ENCODE measurements at regions of chr9 and their contacts with region 1.

Region 1: DNA sequence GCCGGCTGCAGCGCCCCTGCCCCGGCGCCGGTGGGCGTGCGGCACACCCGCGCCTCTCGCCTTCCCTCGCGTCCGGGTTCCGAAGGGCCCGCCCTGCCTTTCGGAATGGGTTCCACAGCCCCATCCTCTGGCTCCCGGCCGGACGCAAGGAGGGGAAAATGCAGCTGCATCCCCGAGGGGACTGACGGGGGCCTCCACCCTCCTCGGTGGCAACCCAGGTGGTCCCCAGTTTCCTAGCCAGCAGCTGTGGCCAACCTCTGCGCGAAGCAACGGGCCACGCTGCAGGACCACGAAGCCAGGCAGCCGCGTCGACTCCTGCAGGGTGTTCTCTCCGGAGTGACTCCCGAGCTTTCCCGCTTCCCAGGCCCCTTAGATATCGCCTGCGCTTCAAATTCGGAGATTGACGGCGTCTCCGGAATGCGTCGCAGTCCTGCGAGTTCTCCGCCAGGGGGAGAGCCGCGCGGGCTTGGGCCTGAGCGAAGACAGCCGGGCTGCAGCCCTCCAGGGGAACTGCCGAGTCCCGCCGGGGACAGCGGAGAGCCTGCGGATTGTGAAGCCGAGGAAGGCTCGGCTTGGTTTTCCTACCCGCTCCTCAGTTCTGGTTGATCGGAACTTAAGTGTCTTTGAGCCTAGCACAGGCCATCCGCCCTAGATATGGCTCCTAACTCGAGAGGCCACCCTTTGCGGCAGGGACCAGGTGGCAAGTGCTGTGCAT is 582 bp upstream of the APBA1 start:
- DNase-seq: peak; percentile 91
- ATAC-seq: peak; percentile 93

Region 2: DNA sequence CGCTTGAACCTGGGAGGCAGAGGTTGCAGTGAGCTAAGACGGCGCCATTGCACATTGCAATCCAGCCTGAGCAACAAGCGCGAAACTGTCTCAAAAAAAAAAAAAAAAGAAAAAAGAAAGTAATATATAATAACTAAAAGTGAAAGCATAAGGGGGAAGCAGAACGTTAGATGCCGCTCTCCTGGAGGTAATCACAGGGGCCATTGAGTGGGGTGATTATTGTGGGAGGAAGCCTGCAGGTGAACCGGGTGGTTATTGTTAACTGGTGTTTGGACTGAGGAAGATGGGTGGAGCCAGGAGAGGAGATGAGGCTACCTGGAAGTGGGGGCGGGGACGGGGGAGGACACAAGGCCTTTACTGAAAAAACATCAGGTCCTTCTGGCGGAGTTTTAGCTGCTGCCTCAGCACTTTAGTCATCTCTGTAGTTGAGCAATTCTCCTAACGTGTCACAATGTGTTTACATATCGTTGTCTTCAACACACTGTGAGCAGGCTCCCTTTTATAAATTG is 504.0 kb before region 1 on chr9:
- intact Hi-C with region 1: no loop called
- DNase-seq: no peak
- ATAC-seq: no peak

Region 3: DNA sequence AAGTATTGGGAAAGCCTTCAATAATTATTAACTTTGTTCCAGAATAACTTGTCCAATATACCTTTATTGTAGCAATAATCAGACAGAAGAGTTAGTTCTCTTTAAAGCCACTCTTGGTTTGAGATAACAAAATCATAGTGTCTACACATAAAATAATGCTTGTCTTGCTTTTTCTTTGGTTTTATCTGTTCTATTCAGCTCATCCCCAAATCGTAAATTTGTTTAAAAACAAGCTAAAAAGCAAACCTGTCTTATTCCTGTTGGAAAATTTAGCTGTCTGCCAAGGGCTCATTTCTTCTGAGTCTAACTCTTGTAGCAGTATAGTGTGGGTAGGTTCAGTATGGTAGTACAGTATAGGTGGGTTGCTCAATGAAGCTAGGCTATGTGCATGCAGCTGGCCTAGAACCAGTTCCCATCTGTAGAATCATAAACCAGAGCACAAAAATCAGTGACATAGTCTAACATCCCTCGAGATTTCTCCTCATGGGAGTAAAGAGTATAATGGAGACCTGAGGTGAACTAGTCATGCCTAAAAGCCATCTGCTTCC is 17.3 kb after region 1 on chr9:
- intact Hi-C with region 1: no loop called
- DNase-seq: no peak
- ATAC-seq: no peak

Region 4: GRCh38 chr9:69759421-69760277 is 86.9 kb after region 1 on chr9 and contains the start of gene PTAR1:
- intact Hi-C with region 1: loop called (anchors 5 kb)
- DNase-seq: peak; percentile 96
- ATAC-seq: peak; percentile 98
- total RNA-seq, gene PTAR1: 22.5 TPM